ENCODE measurements at regions of chr12 and their contacts with region 1.

Region 1: GRCh38 chr12:45669093-45669492 is 60.4 kb upstream of the ARID2 start:
- DNase-seq: no peak
- H3K4me3 ChIP-seq: no peak overlapping the region
- H3K27ac ChIP-seq: no peak overlapping the region
- H3K27me3 ChIP-seq: no peaks in the 10 kb centered on the region
- CTCF ChIP-seq: no peak

Region 2: DNA sequence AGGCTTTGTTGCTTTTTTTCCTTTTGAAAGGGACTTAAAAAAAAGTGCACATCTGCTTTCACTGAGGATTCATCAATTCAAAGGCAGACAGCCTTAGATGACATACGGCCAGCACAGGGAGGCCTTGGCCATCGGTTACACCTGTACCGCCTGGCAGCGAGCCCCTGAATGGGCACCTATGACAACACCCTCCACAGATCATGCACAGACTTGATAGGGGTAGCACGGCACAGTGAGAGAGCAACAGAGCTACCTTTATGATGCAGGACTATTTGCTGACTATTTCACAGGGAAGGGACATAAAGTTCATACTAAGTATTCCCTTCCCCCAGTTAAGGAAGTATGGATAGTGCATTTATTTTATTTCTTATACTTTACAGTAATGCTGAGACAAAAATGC is 77.5 kb before region 1 on chr12:
- intact Hi-C with region 1: no loop called
- DNase-seq: no peak
- H3K4me3 ChIP-seq: no peak overlapping the region
- H3K27ac ChIP-seq: no peak overlapping the region
- H3K27me3 ChIP-seq: no peaks in the 10 kb centered on the region
- CTCF ChIP-seq: no peak

Region 3: GRCh38 chr12:45615268-45615667 is 53.8 kb before region 1 on chr12:
- intact Hi-C with region 1: loop called in 1 of 2 experiments (anchors 10 kb)
- DNase-seq: no peak
- H3K4me3 ChIP-seq: peak overlapping the region in 4 of 59 donors; percentile 0 to 35 (median 8)
- H3K27ac ChIP-seq: peak overlapping the region in 3 of 59 donors; percentile 9 to 48 (median 37)
- H3K27me3 ChIP-seq: no peaks in the 10 kb centered on the region
- CTCF ChIP-seq: no peak

Measured in dorsolateral prefrontal cortex (tissue), 120 donors.